Lower leg skin (tissue), 4 donors: ENCODE measurements at regions of chr16 and their contacts with region 1.

Region 1: DNA sequence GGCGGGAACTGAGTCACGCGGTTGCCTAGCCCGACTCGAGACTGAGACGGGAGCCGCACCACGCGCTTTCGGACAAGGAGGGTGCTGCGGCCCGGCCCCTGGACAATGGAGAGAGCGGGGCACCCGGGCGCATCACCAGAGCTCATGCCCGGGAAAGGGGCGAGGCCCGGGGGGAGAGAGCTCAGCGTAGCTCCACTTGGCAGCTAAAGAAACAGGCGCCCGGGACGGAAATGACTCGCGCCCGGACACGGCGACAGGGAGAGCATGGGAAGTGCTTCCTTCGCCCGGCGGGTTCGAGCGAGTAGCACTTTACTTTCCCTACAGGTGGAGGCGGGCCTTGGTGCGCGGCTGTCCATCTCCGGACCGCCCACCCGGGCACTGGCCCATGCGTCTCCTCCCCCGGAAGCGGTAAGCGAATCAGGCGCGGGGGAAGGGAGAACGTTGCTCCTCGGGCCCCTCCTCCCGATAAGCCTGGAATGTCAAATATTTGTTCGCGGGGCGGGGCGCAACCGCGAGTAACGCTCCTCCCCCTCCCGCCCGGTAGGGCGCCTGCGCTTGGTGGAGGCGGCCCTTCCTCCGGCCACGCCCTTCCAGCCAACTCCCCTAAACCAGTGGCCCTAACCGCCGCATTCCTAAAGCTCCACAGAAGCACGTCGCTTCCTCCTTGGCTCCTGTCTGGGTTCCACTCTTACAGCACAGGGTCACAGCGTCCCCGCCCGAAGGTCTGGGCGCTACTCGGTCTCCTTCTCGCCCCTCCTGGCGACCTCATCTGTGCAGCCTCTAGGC is 1.5 kb upstream of the ESRP2 start:
- DNase-seq: peak; percentile 98 to 100
- H3K4me3 ChIP-seq: peak overlapping the region; percentile 42
- CTCF ChIP-seq: no peak
- POLR2A ChIP-seq: no peak

Region 2: DNA sequence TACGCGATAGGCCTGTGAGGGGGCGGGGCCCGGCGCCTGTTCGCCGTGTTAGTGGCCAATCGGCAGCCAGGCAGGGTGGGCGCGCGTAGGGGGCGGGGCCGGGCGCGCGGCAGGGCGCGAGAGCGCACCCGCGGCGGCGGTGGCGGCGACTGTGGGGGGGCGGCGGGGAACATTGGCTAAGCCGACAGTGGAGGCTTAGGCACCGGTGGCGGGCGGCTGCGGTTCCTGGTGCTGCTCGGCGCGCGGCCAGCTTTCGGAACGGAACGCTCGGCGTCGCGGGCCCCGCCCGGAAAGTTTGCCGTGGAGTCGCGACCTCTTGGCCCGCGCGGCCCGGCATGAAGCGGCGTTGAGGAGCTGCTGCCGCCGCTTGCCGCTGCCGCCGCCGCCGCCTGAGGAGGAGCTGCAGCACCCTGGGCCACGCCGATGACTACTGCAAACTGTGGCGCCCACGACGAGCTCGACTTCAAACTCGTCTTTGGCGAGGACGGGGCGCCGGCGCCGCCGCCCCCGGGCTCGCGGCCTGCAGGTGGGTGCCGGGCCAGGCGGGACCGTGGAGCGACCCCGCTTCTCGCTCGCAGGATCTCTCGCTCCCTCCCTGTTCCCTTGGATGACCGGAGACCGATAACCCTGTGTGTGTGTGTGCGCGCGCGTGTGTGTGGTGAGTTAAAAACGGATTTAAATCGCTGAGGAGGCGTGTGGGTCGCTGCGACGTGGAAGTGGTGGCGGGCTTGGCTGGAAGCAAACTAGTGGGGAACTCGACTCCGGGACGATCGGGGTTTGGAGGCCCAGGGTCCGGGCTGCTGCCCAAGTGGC is 152.0 kb before region 1 on chr16 and contains the start of gene NFATC3:
- intact Hi-C with region 1: loop called (anchors 10 kb)
- DNase-seq: peak; percentile 98 to 100
- H3K4me3 ChIP-seq: peak within 1 kb of the TSS; percentile 78
- CTCF ChIP-seq: no peak
- POLR2A ChIP-seq: no peak
- total RNA-seq, gene NFATC3: 28.2 to 49.2 (median 31.9) TPM

Region 3: DNA sequence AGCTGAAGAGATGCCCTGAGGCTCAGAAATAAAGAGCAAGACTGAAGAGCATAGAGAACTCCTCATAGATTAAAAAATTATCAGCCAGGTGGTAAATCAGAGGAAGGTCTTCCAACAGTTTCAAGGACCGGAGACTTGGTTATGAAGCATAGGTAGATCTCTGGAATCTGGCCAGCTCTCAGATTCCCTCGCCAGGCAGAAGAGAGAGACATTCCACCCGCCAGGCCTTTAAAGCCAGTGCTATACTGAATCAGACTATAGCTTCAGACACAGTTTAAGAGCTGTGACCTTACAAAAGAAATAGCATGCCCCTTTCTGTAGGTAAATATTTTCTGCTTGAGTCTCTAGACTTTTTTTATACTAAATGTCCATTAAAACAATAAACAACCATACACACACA is 82.0 kb before region 1 on chr16:
- intact Hi-C with region 1: no loop called
- DNase-seq: no peak
- H3K4me3 ChIP-seq: no peak overlapping the region
- CTCF ChIP-seq: no peak
- POLR2A ChIP-seq: no peak